CD8-positive, alpha-beta memory T cell (primary cell): ENCODE measurements at regions of chr13 and their contacts with region 1.

Region 1: DNA sequence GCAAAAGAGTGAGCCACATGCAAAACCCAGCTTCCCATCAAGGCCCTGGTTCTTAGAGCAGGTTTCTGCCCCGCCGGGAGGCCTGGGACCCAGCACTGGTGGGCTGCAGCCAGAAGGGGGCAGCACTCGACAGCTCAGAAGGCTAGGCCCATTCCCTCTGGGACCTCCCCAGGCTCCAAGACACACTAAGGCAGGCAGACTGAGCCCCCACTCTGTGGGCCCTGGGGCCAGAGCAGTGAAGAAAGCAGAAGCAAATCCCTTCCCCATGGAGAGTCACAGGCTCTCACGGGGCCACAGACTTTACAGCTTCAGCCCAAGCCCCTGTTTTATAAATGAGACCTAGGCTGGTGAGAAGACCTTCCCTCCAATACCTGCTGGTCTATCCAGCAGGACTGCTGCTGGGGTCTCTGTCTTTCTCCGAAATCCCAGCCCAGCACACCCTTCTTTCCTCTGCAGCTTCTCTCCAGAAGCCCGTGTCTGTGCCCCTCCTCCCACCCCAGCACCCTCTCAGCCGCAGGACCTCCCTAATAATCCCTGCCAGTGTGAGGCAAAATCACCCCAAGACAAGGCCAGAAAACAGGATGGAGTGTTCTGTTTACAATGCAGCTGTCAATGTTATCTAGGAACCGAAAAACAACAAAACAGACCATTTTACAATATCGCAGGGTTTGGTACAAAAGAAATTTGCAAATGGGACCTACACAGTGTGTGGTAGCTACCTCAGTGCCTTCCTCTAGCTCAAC is 109.3 kb downstream of the ABCC4 start:
- DNase-seq: peak; percentile 19 to 61 (median 35)
- H3K4me3 ChIP-seq: no peak overlapping the region
- H3K4me3 Mint-ChIP-seq: peak overlapping the region in 1 of 7 donors; percentile 52
- H3K27ac ChIP-seq: no peak overlapping the region
- H3K27ac Mint-ChIP-seq: peak overlapping the region in 2 of 8 donors; percentile 29 to 93
- H3K4me1 ChIP-seq: peaks cover under 1% of the 10 kb centered on the region
- H3K4me1 Mint-ChIP-seq: peaks cover 3 to 11% (median 8%) of the 10 kb centered on the region in 3 donors
- H3K27me3 ChIP-seq: no peaks in the 10 kb centered on the region
- H3K27me3 Mint-ChIP-seq: no peaks in the 10 kb centered on the region

Region 2: GRCh38 chr13:95181586-95181985 is 10.4 kb before region 1 on chr13:
- CTCF ChIA-PET with region 1: interaction called, 10 read pairs
- POLR2A ChIA-PET with region 1: no interaction called
- DNase-seq: no peak
- H3K4me3 ChIP-seq: no peak overlapping the region
- H3K4me3 Mint-ChIP-seq: no peak overlapping the region
- H3K27ac ChIP-seq: no peak overlapping the region
- H3K27ac Mint-ChIP-seq: peak overlapping the region in 3 of 8 donors; percentile 18 to 74 (median 40)
- H3K4me1 ChIP-seq: peaks cover 57% of the 10 kb centered on the region
- H3K4me1 Mint-ChIP-seq: peaks cover 23 to 57% (median 38%) of the 10 kb centered on the region in 3 donors
- H3K27me3 ChIP-seq: no peaks in the 10 kb centered on the region
- H3K27me3 Mint-ChIP-seq: no peaks in the 10 kb centered on the region

Region 3: GRCh38 chr13:95204231-95204765 is 12.3 kb after region 1 on chr13:
- CTCF ChIA-PET with region 1: interaction called, 13 read pairs
- POLR2A ChIA-PET with region 1: no interaction called
- DNase-seq: no peak
- H3K4me3 ChIP-seq: no peak overlapping the region
- H3K4me3 Mint-ChIP-seq: no peak overlapping the region
- H3K27ac ChIP-seq: no peak overlapping the region
- H3K27ac Mint-ChIP-seq: no peak overlapping the region
- H3K4me1 ChIP-seq: no peaks in the 10 kb centered on the region
- H3K4me1 Mint-ChIP-seq: no peaks in the 10 kb centered on the region
- H3K27me3 ChIP-seq: no peaks in the 10 kb centered on the region
- H3K27me3 Mint-ChIP-seq: no peaks in the 10 kb centered on the region

Region 4: GRCh38 chr13:95378603-95379002 is 186.6 kb after region 1 on chr13:
- CTCF ChIA-PET with region 1: interaction called, 105 read pairs
- POLR2A ChIA-PET with region 1: no interaction called
- DNase-seq: no peak
- H3K4me3 ChIP-seq: no peak overlapping the region
- H3K4me3 Mint-ChIP-seq: no peak overlapping the region
- H3K27ac ChIP-seq: no peak overlapping the region
- H3K27ac Mint-ChIP-seq: no peak overlapping the region
- H3K4me1 ChIP-seq: no peaks in the 10 kb centered on the region
- H3K4me1 Mint-ChIP-seq: peaks cover 4 to 5% (median 5%) of the 10 kb centered on the region in 3 donors
- H3K27me3 ChIP-seq: no peaks in the 10 kb centered on the region
- H3K27me3 Mint-ChIP-seq: peaks cover 10 to 20% of the 10 kb centered on the region in 2 donors

Region 5: DNA sequence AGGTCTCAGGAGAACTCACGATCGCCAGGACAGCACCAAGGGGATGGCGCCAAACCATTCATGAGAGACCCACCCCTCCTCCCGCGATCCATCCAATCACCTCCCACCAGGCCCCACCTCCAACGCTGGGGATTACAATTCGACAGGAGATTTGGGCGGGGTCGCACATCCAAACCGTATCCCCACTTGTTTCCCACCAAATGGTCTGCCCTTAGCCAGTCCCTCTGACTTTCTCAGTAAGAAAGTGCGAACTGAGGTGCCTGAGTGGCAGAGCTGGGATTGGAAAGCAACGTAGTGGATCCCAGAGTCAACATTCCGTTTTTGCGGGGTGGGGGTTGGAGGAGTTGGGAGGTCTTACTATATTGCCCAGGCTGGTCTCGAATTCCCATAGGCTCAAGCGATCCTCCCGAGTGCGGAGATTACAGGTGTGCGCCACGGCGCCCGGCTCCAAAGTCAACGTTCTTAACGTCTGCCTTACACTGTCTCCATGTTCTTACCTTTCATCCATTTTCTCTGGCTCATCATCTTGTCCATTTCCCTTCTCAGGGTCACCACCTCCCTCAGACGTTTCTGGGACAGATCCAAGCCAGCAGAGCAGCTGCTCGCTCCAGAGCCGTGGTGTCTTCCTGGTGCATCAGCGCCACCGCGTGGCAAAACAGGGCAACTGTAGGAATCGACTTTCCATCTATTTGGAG is 212.0 kb after region 1 on chr13:
- CTCF ChIA-PET with region 1: interaction called, 124 read pairs
- POLR2A ChIA-PET with region 1: interaction called, 3 read pairs
- DNase-seq: peak; percentile 58 to 81 (median 64)
- H3K4me3 ChIP-seq: peak overlapping the region; percentile 73
- H3K4me3 Mint-ChIP-seq: peak overlapping the region; percentile 66 to 92 (median 91)
- H3K27ac ChIP-seq: no peak overlapping the region
- H3K27ac Mint-ChIP-seq: peak overlapping the region in 5 of 8 donors; percentile 12 to 87 (median 78)
- H3K4me1 ChIP-seq: no peaks in the 10 kb centered on the region
- H3K4me1 Mint-ChIP-seq: peaks cover 8 to 13% (median 13%) of the 10 kb centered on the region in 3 donors
- H3K27me3 ChIP-seq: no peaks in the 10 kb centered on the region
- H3K27me3 Mint-ChIP-seq: peaks cover 2 to 16% of the 10 kb centered on the region in 2 donors